ENCODE measurements at regions of chr6 and their contacts with region 1.

Region 1: GRCh38 chr6:138001750-138002349 is 105.4 kb downstream of the PERP start:
- DNase-seq: peak in 1 of 2 donors; percentile 28
- ATAC-seq: peak in 2 of 4 donors; percentile 55 to 70
- H3K4me3 ChIP-seq: no peak overlapping the region
- H3K27ac ChIP-seq: no peak overlapping the region
- H3K4me1 ChIP-seq: no peaks in the 10 kb centered on the region
- H3K27me3 ChIP-seq: no peaks in the 10 kb centered on the region
- CTCF ChIP-seq: peak; percentile 81

Region 2: DNA sequence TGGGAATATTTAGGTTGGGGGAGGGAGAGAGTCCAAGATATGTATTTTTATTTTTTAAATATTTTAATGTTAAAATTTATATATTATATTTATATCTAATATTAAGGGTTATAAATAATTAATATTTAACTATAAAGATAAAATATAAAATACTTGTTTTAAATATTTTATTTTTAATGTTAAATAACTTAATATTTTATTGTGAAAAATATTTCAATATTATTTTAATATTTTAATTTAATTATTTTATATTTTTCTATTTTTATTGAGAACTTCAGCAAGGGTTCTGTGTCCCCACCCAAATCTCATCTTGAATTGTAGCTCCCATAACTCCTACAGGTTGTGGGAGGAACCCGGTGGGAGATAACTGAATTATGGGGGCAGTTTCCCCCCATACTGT is 71.4 kb after region 1 on chr6:
- intact Hi-C with region 1: no loop called
- DNase-seq: no peak
- ATAC-seq: no peak
- H3K4me3 ChIP-seq: no peak overlapping the region
- H3K27ac ChIP-seq: no peak overlapping the region
- H3K4me1 ChIP-seq: no peaks in the 10 kb centered on the region
- H3K27me3 ChIP-seq: no peaks in the 10 kb centered on the region
- CTCF ChIP-seq: no peak

Region 3: DNA sequence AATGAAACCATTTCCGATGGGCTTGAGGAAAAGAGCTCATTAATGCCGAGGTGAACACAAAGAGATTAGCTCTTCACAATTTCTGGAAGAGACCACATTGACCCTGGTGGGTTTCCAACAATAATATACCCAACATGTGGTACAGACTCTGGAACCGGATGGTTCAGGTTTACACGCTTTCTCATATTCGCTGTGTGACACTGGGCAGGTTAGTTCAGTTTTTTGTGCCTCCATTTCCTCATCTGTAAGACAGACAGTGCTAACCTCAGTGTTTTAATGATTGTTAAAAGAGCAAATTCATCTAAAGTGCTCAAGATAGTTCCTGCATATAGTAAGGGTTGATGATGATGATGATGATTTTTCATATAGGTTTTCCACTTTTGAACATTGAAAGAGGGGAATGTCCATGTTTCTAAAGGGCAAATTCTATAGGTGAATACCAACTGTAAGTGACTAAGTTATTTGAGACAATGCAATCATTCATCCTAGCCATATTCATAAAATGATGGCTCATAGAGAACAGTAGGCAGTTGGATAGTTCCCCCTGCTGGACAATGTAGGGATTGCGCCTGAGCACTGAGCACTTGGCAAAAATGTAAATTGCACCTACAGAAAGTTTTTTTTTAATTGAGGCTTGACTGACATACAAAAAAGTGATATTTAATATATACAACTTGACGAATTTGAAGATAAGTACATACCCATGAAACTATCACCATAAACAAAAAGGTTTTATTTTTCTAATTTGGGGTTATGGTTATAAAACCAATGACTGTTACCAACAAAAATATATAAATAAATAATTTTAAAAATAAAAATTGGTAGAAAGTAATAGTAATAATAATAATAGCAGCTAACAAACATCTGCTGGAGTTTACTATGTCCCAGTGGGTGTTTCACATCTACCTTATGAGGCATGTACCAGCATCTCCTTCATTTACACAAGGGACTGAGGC is 107.5 kb after region 1 on chr6:
- intact Hi-C with region 1: loop called (anchors 2 kb)
- DNase-seq: peak; percentile 50 to 57
- ATAC-seq: peak; percentile 46 to 75 (median 61)
- H3K4me3 ChIP-seq: no peak overlapping the region
- H3K27ac ChIP-seq: no peak overlapping the region
- H3K4me1 ChIP-seq: no peaks in the 10 kb centered on the region
- H3K27me3 ChIP-seq: peaks cover 0 to 46% (median 4%) of the 10 kb centered on the region in 3 donors
- CTCF ChIP-seq: peak; percentile 90